ENCODE measurements at regions of chr2 and their contacts with region 1.

Region 1: GRCh38 chr2:96868555-96869280 is 1.2 kb downstream of the SEMA4C start:
- DNase-seq: peak; percentile 97
- H3K4me3 ChIP-seq: peak overlapping the region; percentile 65 to 98 (median 96)
- H3K27ac ChIP-seq: peak overlapping the region; percentile 99 to 100 (median 100)
- H3K4me1 ChIP-seq: peaks cover 0 to 71% (median 67%) of the 10 kb centered on the region in 4 donors
- H3K27me3 ChIP-seq: no peaks in the 10 kb centered on the region
- CTCF ChIP-seq: peak; percentile 17 to 72 (median 23)
- EP300 ChIP-seq: no peak
- POLR2A ChIP-seq: no peak

Region 2: GRCh38 chr2:96320728-96321622 is 547.7 kb before region 1 on chr2:
- intact Hi-C with region 1: no loop called
- DNase-seq: no peak
- H3K4me3 ChIP-seq: peak overlapping the region; percentile 22 to 55 (median 52)
- H3K27ac ChIP-seq: peak overlapping the region; percentile 2 to 55 (median 42)
- H3K4me1 ChIP-seq: peaks cover 0 to 25% (median 24%) of the 10 kb centered on the region in 4 donors
- H3K27me3 ChIP-seq: peaks cover 20 to 80% (median 51%) of the 10 kb centered on the region in 3 donors
- CTCF ChIP-seq: no peak
- EP300 ChIP-seq: no peak
- POLR2A ChIP-seq: no peak

Region 3: DNA sequence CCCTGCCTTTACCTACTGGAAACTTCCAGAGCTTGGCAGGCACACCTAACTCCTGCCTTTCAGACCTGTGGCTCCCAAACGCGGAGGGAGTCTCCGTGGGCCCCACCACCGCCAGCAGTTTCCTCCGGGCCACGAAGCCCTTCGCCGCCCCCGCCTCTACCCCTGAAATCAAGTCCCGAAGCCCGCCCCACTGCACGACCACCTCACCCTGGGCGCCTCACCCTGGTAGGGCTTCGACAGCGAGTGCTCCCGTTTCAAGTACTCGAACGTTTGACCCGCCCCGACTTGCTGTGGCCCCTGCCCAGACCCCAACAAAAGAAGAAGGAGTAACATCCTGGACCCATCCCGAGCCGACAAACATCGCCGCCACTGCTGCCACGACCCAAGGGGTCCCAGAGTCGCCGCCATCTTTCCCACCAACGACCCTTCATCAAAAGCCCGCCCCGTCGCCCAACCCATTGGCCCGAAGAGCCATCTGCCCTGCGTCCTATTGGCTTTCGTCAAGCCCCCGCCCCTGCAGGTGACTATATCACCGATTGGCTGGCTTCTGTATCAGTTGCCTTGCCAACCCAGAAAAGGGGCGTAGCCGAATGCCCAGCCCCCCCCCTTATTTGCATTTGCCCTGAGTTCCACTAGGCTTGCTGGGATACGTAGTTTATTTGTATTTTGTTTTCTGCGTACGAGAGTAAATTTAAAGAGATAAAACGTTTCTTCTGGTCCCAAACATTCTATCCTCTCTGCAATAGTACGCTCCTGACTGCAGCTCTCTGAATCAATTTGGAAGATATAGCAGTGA is 128.9 kb before region 1 on chr2 and contains the start of gene LMAN2L:
- intact Hi-C with region 1: no loop called
- DNase-seq: peak; percentile 99
- H3K4me3 ChIP-seq: peak within 1 kb of the TSS; percentile 47 to 95 (median 74)
- H3K27ac ChIP-seq: peak within 1 kb of the TSS; percentile 73 to 84 (median 78)
- H3K4me1 ChIP-seq: peaks cover 0 to 35% (median 19%) of the 10 kb centered on the region in 4 donors
- H3K27me3 ChIP-seq: no peaks in the 10 kb centered on the region
- CTCF ChIP-seq: no peak
- EP300 ChIP-seq: no peak
- POLR2A ChIP-seq: peak; percentile 26 to 48
- total RNA-seq, gene LMAN2L: 11.9 to 23.2 (median 17.2) TPM

Region 4: DNA sequence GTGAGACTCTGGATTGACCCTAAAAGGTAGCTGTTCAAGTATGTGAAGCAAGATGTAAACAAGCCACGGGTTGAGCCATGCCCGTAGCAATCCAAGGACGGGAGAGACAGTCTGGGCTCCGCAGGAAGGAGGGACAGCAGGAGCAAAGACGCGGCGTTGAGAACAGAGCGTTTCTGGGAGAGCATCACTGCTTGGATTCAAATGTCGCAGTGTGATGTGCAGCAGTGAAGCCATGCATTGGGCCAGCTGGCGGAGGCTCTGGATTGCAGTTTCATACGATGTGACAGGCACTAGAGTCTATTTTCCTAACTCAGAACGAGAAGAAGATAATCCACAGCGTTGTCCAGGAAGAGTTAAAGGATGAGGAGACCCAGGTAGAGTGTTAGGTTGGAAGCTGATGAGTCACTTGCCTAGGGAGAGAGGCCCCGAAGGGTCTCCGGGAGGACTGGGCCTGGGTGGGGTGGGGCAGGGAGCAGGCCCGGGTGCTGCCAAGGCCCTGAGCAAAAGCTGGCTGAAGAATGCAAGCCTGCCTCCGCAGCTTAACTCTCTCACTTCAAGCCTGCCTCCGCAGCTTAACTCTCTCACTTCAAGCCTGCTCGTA is 18.8 kb after region 1 on chr2:
- intact Hi-C with region 1: loop called (anchors 1 kb)
- DNase-seq: peak; percentile 90
- H3K4me3 ChIP-seq: peak overlapping the region in 3 of 4 donors; percentile 35 to 37 (median 37)
- H3K27ac ChIP-seq: peak overlapping the region; percentile 75 to 91 (median 88)
- H3K4me1 ChIP-seq: peaks cover 0 to 70% (median 65%) of the 10 kb centered on the region in 4 donors
- H3K27me3 ChIP-seq: no peaks in the 10 kb centered on the region
- CTCF ChIP-seq: no peak
- EP300 ChIP-seq: no peak
- POLR2A ChIP-seq: no peak

Region 5: GRCh38 chr2:96927405-96928243 is 58.9 kb after region 1 on chr2:
- intact Hi-C with region 1: loop called (anchors 1 kb)
- DNase-seq: peak; percentile 96
- H3K4me3 ChIP-seq: peak overlapping the region; percentile 9 to 26 (median 22)
- H3K27ac ChIP-seq: peak overlapping the region; percentile 78 to 91 (median 85)
- H3K4me1 ChIP-seq: peaks cover 0 to 59% (median 36%) of the 10 kb centered on the region in 4 donors
- H3K27me3 ChIP-seq: no peaks in the 10 kb centered on the region
- CTCF ChIP-seq: peak; percentile 35 to 59 (median 49)
- EP300 ChIP-seq: peak in 1 of 4 donors; percentile 40
- POLR2A ChIP-seq: no peak

Region 6: DNA sequence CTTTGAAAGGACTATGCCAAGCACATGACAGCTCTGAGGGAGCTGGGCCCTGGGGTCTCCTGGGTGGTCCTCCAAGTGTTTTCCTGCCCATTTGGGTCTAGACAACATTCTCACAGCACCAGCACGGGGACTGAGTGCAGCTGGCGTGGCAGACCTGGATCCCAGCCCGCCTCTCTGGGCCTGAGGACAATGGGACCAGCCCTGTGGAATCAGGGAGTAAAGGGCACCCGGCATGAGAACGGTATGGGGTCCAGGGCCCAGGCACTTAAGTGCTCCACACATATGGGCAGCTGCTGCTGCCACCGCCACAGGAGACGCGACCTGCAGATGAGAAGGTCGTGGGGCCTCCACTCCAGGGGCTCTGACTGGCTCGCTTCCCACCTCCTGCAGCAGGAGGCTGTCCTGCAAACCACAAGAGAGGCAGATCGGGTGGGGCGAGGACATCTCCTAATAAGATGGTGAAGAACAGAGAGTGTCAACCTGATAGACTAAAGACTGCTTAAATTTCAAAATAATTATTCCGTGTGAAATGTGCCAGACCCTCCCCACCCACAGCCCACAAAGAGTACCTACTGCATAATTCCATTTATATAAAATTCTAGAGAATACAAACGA is 71.4 kb after region 1 on chr2:
- intact Hi-C with region 1: no loop called
- DNase-seq: no peak
- H3K4me3 ChIP-seq: no peak overlapping the region
- H3K27ac ChIP-seq: no peak overlapping the region
- H3K4me1 ChIP-seq: peaks cover 0 to 4% (median 2%) of the 10 kb centered on the region in 4 donors
- H3K27me3 ChIP-seq: no peaks in the 10 kb centered on the region
- CTCF ChIP-seq: no peak
- EP300 ChIP-seq: no peak
- POLR2A ChIP-seq: no peak

Region 7: DNA sequence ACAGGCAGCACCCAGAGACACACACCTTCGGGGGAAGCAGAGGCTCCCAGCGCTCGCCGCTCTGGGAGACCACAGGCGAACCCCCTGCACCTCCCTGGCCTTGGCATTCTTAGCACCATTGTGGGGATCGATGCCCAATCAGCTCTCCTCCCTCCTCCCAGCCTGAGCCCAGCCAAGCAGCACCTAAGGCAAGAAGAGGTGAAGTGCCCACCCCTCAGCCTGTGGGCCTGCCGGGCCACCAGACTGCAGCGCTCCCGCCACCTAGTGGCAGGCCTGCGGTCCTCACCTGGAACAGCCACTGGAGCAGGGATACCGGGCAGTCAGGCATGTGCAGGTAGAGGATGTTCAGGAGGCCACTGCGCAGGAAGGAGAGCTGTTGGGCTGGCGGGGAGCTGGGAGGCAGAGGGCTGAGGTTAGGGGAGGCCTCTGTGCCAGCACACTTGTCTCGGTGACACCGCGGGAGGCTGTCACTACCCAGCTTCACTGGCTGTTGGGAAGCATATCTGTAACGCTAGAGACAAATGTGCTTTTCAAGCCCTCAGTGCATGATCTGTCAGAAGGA is 82.5 kb after region 1 on chr2:
- intact Hi-C with region 1: loop called (anchors 1 kb)
- DNase-seq: peak; percentile 87
- H3K4me3 ChIP-seq: no peak overlapping the region
- H3K27ac ChIP-seq: peak overlapping the region; percentile 72 to 88 (median 82)
- H3K4me1 ChIP-seq: peaks cover 0 to 62% (median 55%) of the 10 kb centered on the region in 4 donors
- H3K27me3 ChIP-seq: no peaks in the 10 kb centered on the region
- CTCF ChIP-seq: peak; percentile 93 to 98 (median 96)
- EP300 ChIP-seq: no peak
- POLR2A ChIP-seq: no peak